ENCODE measurements at regions of chr9 and their contacts with region 1.

Region 1: GRCh38 chr9:35111001-35111933 is 4.4 kb downstream of the ATOSB start:
- DNase-seq: peak; percentile 92 to 98 (median 96)
- ATAC-seq: peak; percentile 80
- H3K4me3 ChIP-seq: peak overlapping the region; percentile 73
- H3K4me3 Mint-ChIP-seq: peak overlapping the region; percentile 93
- H3K27ac ChIP-seq: peak overlapping the region; percentile 70 to 74
- H3K27ac Mint-ChIP-seq: peak overlapping the region; percentile 84
- H3K4me1 ChIP-seq: peaks cover 54% of the 10 kb centered on the region
- H3K4me1 Mint-ChIP-seq: peaks cover 61% of the 10 kb centered on the region
- H3K27me3 ChIP-seq: no peaks in the 10 kb centered on the region
- H3K27me3 Mint-ChIP-seq: no peaks in the 10 kb centered on the region
- CTCF ChIP-seq: no peak

Region 2: GRCh38 chr9:35035851-35036701 is 75.2 kb before region 1 on chr9:
- CTCF ChIA-PET with region 1: no interaction called
- POLR2A ChIA-PET with region 1: no interaction called
- intact Hi-C with region 1: no loop called
- DNase-seq: peak; percentile 11 to 65 (median 40)
- ATAC-seq: peak; percentile 84
- H3K4me3 ChIP-seq: peak overlapping the region; percentile 42
- H3K4me3 Mint-ChIP-seq: peak overlapping the region; percentile 76
- H3K27ac ChIP-seq: no peak overlapping the region
- H3K27ac Mint-ChIP-seq: peak overlapping the region; percentile 76
- H3K4me1 ChIP-seq: peaks cover 10% of the 10 kb centered on the region
- H3K4me1 Mint-ChIP-seq: peaks cover 15% of the 10 kb centered on the region
- H3K27me3 ChIP-seq: no peaks in the 10 kb centered on the region
- H3K27me3 Mint-ChIP-seq: no peaks in the 10 kb centered on the region
- CTCF ChIP-seq: no peak

Region 3: DNA sequence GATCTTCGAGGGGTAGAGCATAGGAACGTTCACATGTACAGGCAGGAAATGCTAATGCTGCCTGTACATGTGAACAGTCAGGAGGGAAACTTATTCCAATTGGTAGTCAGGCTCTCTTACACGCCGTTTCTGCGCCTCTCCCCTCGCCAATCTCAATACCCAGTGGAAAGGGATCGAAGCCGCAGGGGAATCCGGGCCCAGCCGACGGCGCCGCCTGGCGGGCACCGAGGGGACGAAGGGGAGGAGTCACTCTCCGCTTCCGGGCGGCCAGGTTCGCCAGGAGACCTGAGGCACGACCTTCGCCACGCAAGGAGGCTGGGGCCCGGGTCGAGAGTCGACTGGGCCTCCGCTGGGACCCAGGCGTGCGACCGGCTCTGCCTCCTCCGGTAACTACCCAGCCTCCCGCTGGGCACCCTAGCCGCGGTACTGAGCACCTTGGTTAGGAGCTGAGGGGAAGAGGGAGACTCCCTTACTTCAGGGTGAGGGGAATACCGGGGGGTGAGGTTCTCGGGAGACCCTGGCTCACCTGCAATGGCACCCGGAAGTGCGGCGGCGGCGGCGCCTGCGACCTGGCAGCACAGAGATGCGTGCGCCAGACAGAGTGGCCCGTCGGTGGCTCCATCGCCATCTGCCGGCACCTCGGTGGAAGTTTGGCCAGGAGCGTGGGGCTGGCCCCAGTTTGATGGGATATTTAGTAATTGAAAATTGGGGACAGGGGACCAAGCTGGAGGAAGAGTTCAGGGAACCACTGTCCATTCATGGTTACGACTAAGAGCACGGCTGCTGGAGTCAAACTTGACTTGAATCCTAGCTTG is 15.0 kb before region 1 on chr9 and contains the start of gene PIGO:
- CTCF ChIA-PET with region 1: interaction called, 15 read pairs
- POLR2A ChIA-PET with region 1: interaction called, 13 read pairs
- intact Hi-C with region 1: loop called in 1 of 2 experiments (anchors 1 kb)
- DNase-seq: peak; percentile 81 to 95 (median 88)
- ATAC-seq: peak; percentile 88
- H3K4me3 ChIP-seq: peak within 1 kb of the TSS; percentile 82
- H3K4me3 Mint-ChIP-seq: peak within 1 kb of the TSS; percentile 92
- H3K27ac ChIP-seq: peak within 1 kb of the TSS; percentile 96 to 99
- H3K27ac Mint-ChIP-seq: peak within 1 kb of the TSS; percentile 93
- H3K4me1 ChIP-seq: peaks cover 26% of the 10 kb centered on the region
- H3K4me1 Mint-ChIP-seq: peaks cover 43% of the 10 kb centered on the region
- H3K27me3 ChIP-seq: no peaks in the 10 kb centered on the region
- H3K27me3 Mint-ChIP-seq: no peaks in the 10 kb centered on the region
- CTCF ChIP-seq: peak; percentile 81
- total RNA-seq, gene PIGO: 17.5 to 18.9 TPM

Region 4: DNA sequence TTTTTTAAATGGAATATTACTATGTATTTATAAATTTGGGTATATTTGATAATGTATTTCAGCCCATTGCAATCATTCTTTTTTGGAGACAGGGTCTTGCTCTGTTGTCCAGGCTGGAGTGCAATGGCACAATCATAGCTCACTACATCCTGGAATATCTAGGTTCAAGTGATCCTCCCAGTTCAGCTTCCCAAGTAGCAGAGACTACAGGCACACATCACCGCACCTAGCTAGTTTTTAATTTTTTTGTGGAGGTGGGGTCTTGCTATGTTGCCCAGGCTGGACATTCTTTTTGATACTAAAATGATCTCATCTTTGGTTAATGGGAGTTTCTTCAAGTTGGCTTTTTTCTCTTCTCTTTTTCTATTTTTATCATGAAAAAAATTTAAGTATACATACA is 141.8 kb after region 1 on chr9:
- CTCF ChIA-PET with region 1: no interaction called
- POLR2A ChIA-PET with region 1: no interaction called
- intact Hi-C with region 1: no loop called
- DNase-seq: no peak
- ATAC-seq: no peak
- H3K4me3 ChIP-seq: no peak overlapping the region
- H3K4me3 Mint-ChIP-seq: no peak overlapping the region
- H3K27ac ChIP-seq: no peak overlapping the region
- H3K27ac Mint-ChIP-seq: no peak overlapping the region
- H3K4me1 ChIP-seq: no peaks in the 10 kb centered on the region
- H3K4me1 Mint-ChIP-seq: no peaks in the 10 kb centered on the region
- H3K27me3 ChIP-seq: no peaks in the 10 kb centered on the region
- H3K27me3 Mint-ChIP-seq: peaks cover 30% of the 10 kb centered on the region
- CTCF ChIP-seq: no peak

Region 5: DNA sequence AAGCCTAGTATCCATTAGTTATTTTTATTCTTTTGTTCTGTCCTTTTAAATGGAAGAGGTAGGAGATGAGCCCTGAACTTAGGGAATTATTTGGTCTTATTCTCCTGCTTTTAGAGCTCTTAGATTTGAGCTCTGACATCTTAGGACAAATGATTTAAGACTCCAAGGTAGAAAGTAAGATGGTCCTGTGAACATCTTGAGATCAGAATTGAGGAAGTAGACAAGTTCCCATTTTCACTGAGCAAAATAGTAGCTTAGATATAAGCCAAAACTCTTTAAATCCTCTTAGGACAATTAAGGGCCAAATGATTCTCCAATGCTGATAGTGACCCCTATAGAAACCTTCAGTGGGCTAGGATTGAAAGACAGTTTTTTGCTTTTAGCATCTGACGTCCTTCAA is 325.7 kb after region 1 on chr9:
- CTCF ChIA-PET with region 1: no interaction called
- POLR2A ChIA-PET with region 1: no interaction called
- intact Hi-C with region 1: no loop called
- DNase-seq: no peak
- ATAC-seq: no peak
- H3K4me3 ChIP-seq: no peak overlapping the region
- H3K4me3 Mint-ChIP-seq: no peak overlapping the region
- H3K27ac ChIP-seq: no peak overlapping the region
- H3K27ac Mint-ChIP-seq: no peak overlapping the region
- H3K4me1 ChIP-seq: no peaks in the 10 kb centered on the region
- H3K4me1 Mint-ChIP-seq: no peaks in the 10 kb centered on the region
- H3K27me3 ChIP-seq: no peaks in the 10 kb centered on the region
- H3K27me3 Mint-ChIP-seq: peaks cover 2% of the 10 kb centered on the region
- CTCF ChIP-seq: no peak